ENCODE measurements at regions of chr14 and their contacts with region 1.

Region 1: DNA sequence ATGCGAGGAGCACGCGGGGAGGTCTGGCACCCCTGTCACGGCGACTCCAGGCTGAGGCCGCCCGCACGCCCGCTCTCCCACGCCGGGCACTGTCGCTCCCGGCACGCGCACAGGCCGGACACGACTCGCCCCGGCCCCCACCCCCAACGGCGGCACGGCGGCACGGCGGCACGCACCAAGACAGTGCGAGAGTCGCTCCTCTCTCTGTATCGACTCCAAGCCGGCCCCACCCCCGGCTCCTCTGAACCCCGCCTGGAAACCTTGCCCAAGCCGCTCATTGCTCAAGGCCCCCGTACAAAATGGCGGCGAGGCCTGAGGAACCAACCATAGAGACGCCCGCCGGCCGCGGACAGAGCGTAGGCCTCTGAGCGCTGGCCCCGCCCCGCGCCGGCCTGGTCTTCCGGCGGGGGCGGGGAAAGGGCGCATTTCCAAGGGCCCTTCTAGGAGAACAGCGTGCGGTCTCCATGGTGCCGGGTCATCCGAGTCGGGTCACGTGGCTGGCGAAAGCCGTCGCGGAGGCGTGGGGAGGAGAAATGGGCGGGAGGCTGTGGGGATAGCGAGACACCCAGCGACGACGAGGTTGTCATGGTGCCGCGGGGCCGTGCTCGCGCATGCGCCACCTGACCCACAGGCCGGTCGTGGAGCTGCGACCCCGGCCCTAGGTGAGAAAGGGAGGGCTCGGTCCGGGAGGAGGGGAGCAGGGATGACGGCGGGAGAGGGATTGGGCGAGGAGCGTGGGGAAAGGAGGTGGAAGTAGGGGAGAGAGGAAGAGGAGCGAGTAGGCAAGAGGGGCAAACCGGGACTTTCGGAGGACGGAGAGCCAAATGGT is at the start of gene CIPC:
- DNase-seq: peak; percentile 99 to 100
- H3K4me3 ChIP-seq: peak within 1 kb of the TSS; percentile 89 to 94
- H3K27ac ChIP-seq: peak within 1 kb of the TSS; percentile 96 to 97
- H3K4me1 ChIP-seq: peaks cover 6 to 37% of the 10 kb centered on the region in 2 donors
- H3K27me3 ChIP-seq: no peaks in the 10 kb centered on the region
- CTCF ChIP-seq: no peak
- total RNA-seq, gene CIPC: 5.0 TPM

Region 2: GRCh38 chr14:76773188-76773885 is 324.6 kb before region 1 on chr14:
- intact Hi-C with region 1: loop called (anchors 5 kb)
- DNase-seq: peak; percentile 60 to 92
- H3K4me3 ChIP-seq: peak overlapping the region in 1 of 2 donors; percentile 21
- H3K27ac ChIP-seq: peak overlapping the region; percentile 95 to 97
- H3K4me1 ChIP-seq: peaks cover 22 to 45% of the 10 kb centered on the region in 2 donors
- H3K27me3 ChIP-seq: no peaks in the 10 kb centered on the region
- CTCF ChIP-seq: peak in 1 of 3 experiments; percentile 7

Region 3: DNA sequence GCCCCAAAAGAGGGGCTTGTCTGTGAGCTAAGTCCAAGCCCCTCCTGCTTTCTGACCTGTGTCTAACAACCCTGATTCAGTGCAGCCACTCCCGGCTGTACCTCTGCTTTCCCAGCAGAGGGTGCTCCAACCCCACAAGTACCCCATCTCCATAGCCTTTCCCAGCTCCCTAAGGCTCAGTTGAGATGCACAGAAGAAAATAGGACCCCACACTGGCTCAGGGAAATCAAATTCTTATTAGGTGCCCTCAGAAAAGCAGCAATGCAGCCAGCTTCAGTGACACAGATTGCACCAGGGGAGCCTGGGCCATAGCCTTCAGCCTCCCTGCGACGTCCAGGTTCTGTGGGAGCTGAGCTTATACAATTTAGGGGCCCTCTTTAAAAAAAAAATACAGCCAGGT is 221.8 kb before region 1 on chr14:
- intact Hi-C with region 1: loop called (anchors 2 kb)
- DNase-seq: no peak
- H3K4me3 ChIP-seq: no peak overlapping the region
- H3K27ac ChIP-seq: no peak overlapping the region
- H3K4me1 ChIP-seq: no peaks in the 10 kb centered on the region
- H3K27me3 ChIP-seq: no peaks in the 10 kb centered on the region
- CTCF ChIP-seq: peak; percentile 91 to 93 (median 91)

Region 4: GRCh38 chr14:77028384-77029231 is 69.3 kb before region 1 on chr14 and contains the start of gene IRF2BPL:
- intact Hi-C with region 1: loop called (anchors 1 kb)
- DNase-seq: peak; percentile 94 to 99
- H3K4me3 ChIP-seq: peak within 1 kb of the TSS; percentile 91 to 92
- H3K27ac ChIP-seq: peak within 1 kb of the TSS; percentile 99 to 100
- H3K4me1 ChIP-seq: peaks cover 19 to 61% of the 10 kb centered on the region in 2 donors
- H3K27me3 ChIP-seq: no peaks in the 10 kb centered on the region
- CTCF ChIP-seq: no peak
- total RNA-seq, gene IRF2BPL: 68.1 TPM

Region 5: GRCh38 chr14:77124345-77125280 is 26.7 kb after region 1 on chr14:
- intact Hi-C with region 1: loop called (anchors 2 kb)
- DNase-seq: peak in 1 of 2 donors; percentile 75
- H3K4me3 ChIP-seq: peak overlapping the region; percentile 34 to 81
- H3K27ac ChIP-seq: no peak overlapping the region
- H3K4me1 ChIP-seq: peaks cover 5 to 8% of the 10 kb centered on the region in 2 donors
- H3K27me3 ChIP-seq: no peaks in the 10 kb centered on the region
- CTCF ChIP-seq: peak in 2 of 3 experiments; percentile 15 to 91

Region 6: GRCh38 chr14:77457522-77458290 is 359.8 kb after region 1 on chr14 and contains the starts of genes AHSA1 and VIPAS39:
- intact Hi-C with region 1: loop called (anchors 5 kb)
- DNase-seq: peak; percentile 94 to 98
- H3K4me3 ChIP-seq: peak within 1 kb of the TSS; percentile 71 to 92
- H3K27ac ChIP-seq: peak within 1 kb of the TSS; percentile 86 to 90
- H3K4me1 ChIP-seq: peaks cover 5 to 23% of the 10 kb centered on the region in 2 donors
- H3K27me3 ChIP-seq: no peaks in the 10 kb centered on the region
- CTCF ChIP-seq: no peak
- total RNA-seq, gene AHSA1: 123 TPM
- total RNA-seq, gene VIPAS39: 2.8 TPM